Ovary (tissue), 10 donors: ENCODE measurements at regions of chr2 and their contacts with region 1.

Region 1: GRCh38 chr2:46876741-46877384 is 38.7 kb downstream of the MCFD2 start:
- DNase-seq: no peak
- H3K4me3 ChIP-seq: no peak overlapping the region
- H3K27ac ChIP-seq: no peak overlapping the region
- H3K4me1 ChIP-seq: peaks cover 27% of the 10 kb centered on the region
- H3K27me3 ChIP-seq: no peaks in the 10 kb centered on the region
- CTCF ChIP-seq: peak in 1 of 3 donors; percentile 51
- EP300 ChIP-seq: no peak
- POLR2A ChIP-seq: no peak

Region 2: DNA sequence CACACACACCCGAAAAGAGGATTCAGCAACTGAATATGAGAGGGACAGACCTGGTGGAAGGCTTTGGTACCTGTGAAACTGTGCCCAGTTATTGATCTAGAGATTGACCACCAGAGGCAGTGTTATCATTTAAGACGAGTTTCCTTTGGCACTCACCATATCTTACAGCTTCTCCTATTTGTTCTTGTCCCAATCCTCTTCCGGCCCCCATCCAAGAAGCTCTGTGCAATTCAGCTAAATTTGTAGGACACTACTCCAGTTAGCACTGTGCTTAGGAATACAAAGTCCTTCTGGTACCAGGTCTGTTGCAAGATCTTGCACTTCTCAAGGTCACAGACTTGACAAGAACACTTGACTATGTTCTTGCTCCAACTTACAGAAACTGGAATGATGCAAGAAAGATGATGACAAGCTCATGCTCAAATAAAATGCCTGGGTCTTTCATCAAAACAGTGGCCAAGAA is 219.8 kb before region 1 on chr2:
- intact Hi-C with region 1: loop called in 1 of 4 experiments (anchors 5 kb)
- DNase-seq: peak; percentile 53 to 90 (median 76)
- H3K4me3 ChIP-seq: no peak overlapping the region
- H3K27ac ChIP-seq: peak overlapping the region in 1 of 2 donors; percentile 63
- H3K4me1 ChIP-seq: peaks cover 12% of the 10 kb centered on the region
- H3K27me3 ChIP-seq: no peaks in the 10 kb centered on the region
- CTCF ChIP-seq: peak; percentile 18 to 59 (median 58)
- EP300 ChIP-seq: peak; percentile 79
- POLR2A ChIP-seq: no peak

Region 3: GRCh38 chr2:46803911-46804670 is 72.8 kb before region 1 on chr2:
- intact Hi-C with region 1: loop called in 1 of 4 experiments (anchors 10 kb)
- DNase-seq: no peak
- H3K4me3 ChIP-seq: no peak overlapping the region
- H3K27ac ChIP-seq: no peak overlapping the region
- H3K4me1 ChIP-seq: no peaks in the 10 kb centered on the region
- H3K27me3 ChIP-seq: no peaks in the 10 kb centered on the region
- CTCF ChIP-seq: no peak
- EP300 ChIP-seq: no peak
- POLR2A ChIP-seq: no peak